ENCODE measurements at regions of chr15 and their contacts with region 1.

Region 1: GRCh38 chr15:69058830-69059556 is 44.5 kb downstream of the NOX5 start:
- DNase-seq: peak; percentile 90 to 96
- ATAC-seq: peak; percentile 63
- H3K4me3 ChIP-seq: no peak overlapping the region
- H3K27ac ChIP-seq: no peak overlapping the region
- H3K4me1 ChIP-seq: no peaks in the 10 kb centered on the region
- H3K27me3 ChIP-seq: no peaks in the 10 kb centered on the region

Region 2: GRCh38 chr15:69104050-69104750 is 45.2 kb after region 1 on chr15:
- intact Hi-C with region 1: no loop called
- DNase-seq: no peak
- ATAC-seq: no peak
- H3K4me3 ChIP-seq: no peak overlapping the region
- H3K27ac ChIP-seq: no peak overlapping the region
- H3K4me1 ChIP-seq: no peaks in the 10 kb centered on the region
- H3K27me3 ChIP-seq: no peaks in the 10 kb centered on the region

Region 3: DNA sequence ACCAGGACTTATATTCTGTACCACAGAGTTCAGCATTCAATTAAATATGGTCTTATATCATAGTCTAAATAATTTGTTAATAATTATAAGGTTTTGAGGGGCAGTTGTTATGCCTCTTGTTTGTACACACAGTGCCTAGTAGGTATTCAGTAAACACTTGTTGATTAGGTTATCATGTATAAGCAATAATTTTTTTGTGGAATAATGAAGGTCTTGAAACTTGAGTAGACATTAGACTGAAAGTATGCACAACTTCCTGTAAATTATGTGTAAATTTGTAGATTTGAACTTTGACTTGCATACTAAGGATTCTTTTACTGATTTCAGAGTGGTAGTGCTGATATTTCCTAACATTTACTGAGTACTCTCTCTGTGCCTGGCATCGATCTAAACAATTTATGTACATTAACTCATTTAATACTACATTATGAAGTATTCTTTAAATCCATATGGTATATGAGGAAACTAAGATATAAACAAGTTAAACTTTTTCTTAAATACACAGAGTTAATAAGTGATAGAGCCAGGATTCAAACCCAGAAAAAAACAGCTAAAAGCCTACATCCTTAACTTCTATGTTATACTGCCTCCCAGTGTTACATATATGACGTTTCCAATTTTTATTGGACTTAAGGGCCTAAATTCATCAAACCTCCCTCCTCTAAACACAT is 166.5 kb after region 1 on chr15:
- intact Hi-C with region 1: loop called (anchors 2 to 5 kb)
- DNase-seq: no peak
- ATAC-seq: no peak
- H3K4me3 ChIP-seq: no peak overlapping the region
- H3K27ac ChIP-seq: no peak overlapping the region
- H3K4me1 ChIP-seq: no peaks in the 10 kb centered on the region
- H3K27me3 ChIP-seq: no peaks in the 10 kb centered on the region

Region 4: DNA sequence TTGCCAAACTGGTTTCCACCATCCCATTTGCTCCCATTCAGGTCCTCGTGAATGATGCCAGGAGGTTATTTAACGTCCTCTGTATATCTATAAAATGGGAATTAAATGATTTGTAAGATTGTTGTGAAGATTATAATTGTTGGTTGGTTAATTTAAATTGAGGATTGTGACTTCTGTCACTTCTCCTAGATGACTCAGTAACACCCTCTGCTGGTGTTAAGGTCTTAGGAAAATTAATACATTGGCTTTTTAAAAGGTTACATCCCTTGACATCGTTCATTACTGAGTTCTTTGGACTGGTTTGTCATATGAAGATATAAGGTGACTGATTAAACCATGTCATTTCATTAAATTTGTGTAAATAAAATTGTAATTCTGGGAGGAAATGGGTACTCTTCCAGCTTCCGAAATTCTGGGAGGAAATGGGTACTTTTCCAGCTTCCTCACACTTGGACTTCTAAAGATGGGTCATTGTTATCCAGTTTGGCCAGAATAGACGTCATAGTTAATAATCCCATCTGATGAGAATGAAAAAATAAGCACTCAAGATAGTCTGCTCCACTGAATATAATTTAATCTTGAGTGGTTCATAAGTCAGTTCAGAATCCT is 206.5 kb after region 1 on chr15:
- intact Hi-C with region 1: loop called in 1 of 2 experiments (anchors 5 kb)
- DNase-seq: no peak
- ATAC-seq: no peak
- H3K4me3 ChIP-seq: no peak overlapping the region
- H3K27ac ChIP-seq: no peak overlapping the region
- H3K4me1 ChIP-seq: no peaks in the 10 kb centered on the region
- H3K27me3 ChIP-seq: no peaks in the 10 kb centered on the region

Region 5: GRCh38 chr15:69394556-69395282 is 335.7 kb after region 1 on chr15:
- intact Hi-C with region 1: loop called (anchors 1 to 5 kb)
- DNase-seq: peak; percentile 86 to 95
- ATAC-seq: peak; percentile 93
- H3K4me3 ChIP-seq: no peak overlapping the region
- H3K27ac ChIP-seq: no peak overlapping the region
- H3K4me1 ChIP-seq: no peaks in the 10 kb centered on the region
- H3K27me3 ChIP-seq: no peaks in the 10 kb centered on the region

Region 6: DNA sequence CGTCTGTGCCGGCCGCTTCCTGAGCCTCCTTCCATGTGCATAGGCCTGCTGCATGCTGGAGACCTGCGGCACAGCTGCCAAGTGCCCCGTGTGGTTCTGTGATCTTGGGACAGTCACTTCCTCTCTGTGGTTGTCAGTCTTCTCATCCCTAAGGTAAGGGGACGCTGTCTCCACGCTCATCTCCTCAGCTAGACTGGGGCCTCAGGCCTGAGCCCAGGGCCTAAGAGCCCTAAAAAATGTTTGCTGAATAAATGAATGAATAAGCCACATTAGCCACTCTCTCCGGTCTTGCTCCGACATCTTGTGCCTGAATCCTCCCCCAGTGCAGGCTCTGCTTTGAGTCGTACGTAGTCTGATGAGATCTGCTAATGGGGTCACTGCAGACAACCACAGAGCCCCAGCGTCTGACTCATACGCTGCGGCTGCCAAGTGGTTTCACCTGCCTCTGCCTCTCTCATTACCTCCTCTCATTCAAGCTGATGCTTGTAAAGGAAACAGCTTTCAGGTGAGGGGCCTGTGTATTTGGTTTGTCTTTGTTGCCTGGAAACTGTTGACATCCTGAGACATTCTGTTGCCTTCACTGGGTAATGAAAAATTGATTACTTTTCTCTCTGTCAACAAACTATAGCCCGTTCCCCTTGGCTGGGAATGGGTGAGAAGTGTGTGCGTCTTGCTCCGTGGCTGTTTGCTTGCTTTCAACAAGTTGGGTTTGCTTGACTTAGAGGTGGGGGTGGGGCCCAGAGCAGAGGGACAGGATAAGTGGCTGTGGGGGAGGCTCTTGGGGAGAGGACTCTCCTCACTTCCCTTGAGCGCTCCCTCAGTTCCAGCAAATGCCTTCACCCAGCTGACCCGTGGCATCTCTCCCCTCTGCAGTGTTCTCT is 409.5 kb after region 1 on chr15:
- intact Hi-C with region 1: loop called (anchors 1 to 5 kb)
- DNase-seq: no peak
- ATAC-seq: no peak
- H3K4me3 ChIP-seq: no peak overlapping the region
- H3K27ac ChIP-seq: no peak overlapping the region
- H3K4me1 ChIP-seq: no peaks in the 10 kb centered on the region
- H3K27me3 ChIP-seq: no peaks in the 10 kb centered on the region